Activated CD8-positive, alpha-beta memory T cell treated with anti-CD3 and anti-CD28 coated beads, Interleukin-2, amount 10 ng/mL, durations not matched to agents 7 days and 5 days (primary cell): ENCODE measurements at regions of chr4 and their contacts with region 1.

Region 1: GRCh38 chr4:109702950-109703663 is at the start of gene CASP6:
- DNase-seq: peak; percentile 86
- ATAC-seq: peak; percentile 91
- H3K4me3 Mint-ChIP-seq: peak within 1 kb of the TSS; percentile 91
- H3K27ac Mint-ChIP-seq: peak within 1 kb of the TSS; percentile 89
- H3K4me1 Mint-ChIP-seq: peaks cover 33% of the 10 kb centered on the region
- H3K27me3 Mint-ChIP-seq: no peaks in the 10 kb centered on the region
- total RNA-seq, gene CASP6: 20.3 to 20.8 TPM

Region 2: DNA sequence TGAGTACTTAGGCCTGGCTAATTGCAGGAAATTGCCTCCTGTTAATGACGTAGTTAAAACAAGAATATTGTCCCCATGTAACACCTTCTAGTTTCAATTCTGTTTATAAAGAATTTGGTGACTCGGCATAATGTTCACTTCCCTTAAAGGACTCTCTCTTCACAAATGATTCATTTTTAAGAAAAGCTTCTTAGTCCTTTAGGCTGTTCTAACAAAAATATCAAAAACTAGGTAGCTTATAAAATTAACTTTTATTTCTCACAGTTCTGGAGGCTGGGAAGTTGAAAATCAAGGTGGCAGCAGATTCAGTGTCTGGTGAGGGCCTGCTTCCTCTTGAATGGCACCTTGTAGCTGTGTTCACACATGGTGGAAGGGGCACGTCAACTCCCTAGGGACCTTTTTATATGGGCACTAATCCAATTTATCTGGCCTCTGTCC is 424.5 kb before region 1 on chr4:
- CTCF ChIA-PET with region 1: no interaction called
- DNase-seq: no peak
- ATAC-seq: peak; percentile 62
- H3K4me3 Mint-ChIP-seq: no peak overlapping the region
- H3K27ac Mint-ChIP-seq: peak overlapping the region; percentile 0
- H3K4me1 Mint-ChIP-seq: peaks cover 26% of the 10 kb centered on the region
- H3K27me3 Mint-ChIP-seq: peaks cover 17% of the 10 kb centered on the region

Region 3: GRCh38 chr4:109690690-109691410 is 12.3 kb before region 1 on chr4:
- CTCF ChIA-PET with region 1: interaction called, 18 read pairs
- DNase-seq: no peak
- ATAC-seq: peak; percentile 92
- H3K4me3 Mint-ChIP-seq: no peak overlapping the region
- H3K27ac Mint-ChIP-seq: peak overlapping the region; percentile 66
- H3K4me1 Mint-ChIP-seq: peaks cover 30% of the 10 kb centered on the region
- H3K27me3 Mint-ChIP-seq: no peaks in the 10 kb centered on the region

Region 4: GRCh38 chr4:109729718-109730618 is 26.9 kb after region 1 on chr4 and contains the start of gene PLA2G12A:
- CTCF ChIA-PET with region 1: interaction called, 24 read pairs
- DNase-seq: peak; percentile 72
- ATAC-seq: peak; percentile 89
- H3K4me3 Mint-ChIP-seq: peak within 1 kb of the TSS; percentile 87
- H3K27ac Mint-ChIP-seq: peak within 1 kb of the TSS; percentile 83
- H3K4me1 Mint-ChIP-seq: peaks cover 18% of the 10 kb centered on the region
- H3K27me3 Mint-ChIP-seq: no peaks in the 10 kb centered on the region
- total RNA-seq, gene PLA2G12A: 14.4 to 14.6 TPM